MCF 10A (cell line): ENCODE measurements at regions of chr21 and their contacts with region 1.

Region 1: GRCh38 chr21:40143822-40144525 is 276.7 kb downstream of the PCP4 start:
- DNase-seq: peak; percentile 40
- H3K4me3 Mint-ChIP-seq: no peak overlapping the region
- H3K27ac Mint-ChIP-seq: no peak overlapping the region
- H3K4me1 Mint-ChIP-seq: no peaks in the 10 kb centered on the region
- H3K27me3 Mint-ChIP-seq: no peaks in the 10 kb centered on the region
- CTCF ChIP-seq: peak; percentile 60

Region 2: GRCh38 chr21:40054403-40054802 is 89.6 kb before region 1 on chr21:
- CTCF ChIA-PET with region 1: no interaction called
- POLR2A ChIA-PET with region 1: no interaction called
- intact Hi-C with region 1: no loop called
- DNase-seq: peak; percentile 68
- H3K4me3 Mint-ChIP-seq: no peak overlapping the region
- H3K27ac Mint-ChIP-seq: no peak overlapping the region
- H3K4me1 Mint-ChIP-seq: peaks cover 12% of the 10 kb centered on the region
- H3K27me3 Mint-ChIP-seq: peaks cover 41% of the 10 kb centered on the region
- CTCF ChIP-seq: no peak

Region 3: GRCh38 chr21:41068967-41069642 is 925.1 kb after region 1 on chr21:
- CTCF ChIA-PET with region 1: interaction called, 4 read pairs
- POLR2A ChIA-PET with region 1: no interaction called
- intact Hi-C with region 1: loop called (anchors 5 kb)
- DNase-seq: peak; percentile 62
- H3K4me3 Mint-ChIP-seq: peak overlapping the region; percentile 58
- H3K27ac Mint-ChIP-seq: no peak overlapping the region
- H3K4me1 Mint-ChIP-seq: peaks cover 5% of the 10 kb centered on the region
- H3K27me3 Mint-ChIP-seq: no peaks in the 10 kb centered on the region
- CTCF ChIP-seq: peak; percentile 77